ENCODE measurements at regions of chr11 and their contacts with region 1.

Region 1: DNA sequence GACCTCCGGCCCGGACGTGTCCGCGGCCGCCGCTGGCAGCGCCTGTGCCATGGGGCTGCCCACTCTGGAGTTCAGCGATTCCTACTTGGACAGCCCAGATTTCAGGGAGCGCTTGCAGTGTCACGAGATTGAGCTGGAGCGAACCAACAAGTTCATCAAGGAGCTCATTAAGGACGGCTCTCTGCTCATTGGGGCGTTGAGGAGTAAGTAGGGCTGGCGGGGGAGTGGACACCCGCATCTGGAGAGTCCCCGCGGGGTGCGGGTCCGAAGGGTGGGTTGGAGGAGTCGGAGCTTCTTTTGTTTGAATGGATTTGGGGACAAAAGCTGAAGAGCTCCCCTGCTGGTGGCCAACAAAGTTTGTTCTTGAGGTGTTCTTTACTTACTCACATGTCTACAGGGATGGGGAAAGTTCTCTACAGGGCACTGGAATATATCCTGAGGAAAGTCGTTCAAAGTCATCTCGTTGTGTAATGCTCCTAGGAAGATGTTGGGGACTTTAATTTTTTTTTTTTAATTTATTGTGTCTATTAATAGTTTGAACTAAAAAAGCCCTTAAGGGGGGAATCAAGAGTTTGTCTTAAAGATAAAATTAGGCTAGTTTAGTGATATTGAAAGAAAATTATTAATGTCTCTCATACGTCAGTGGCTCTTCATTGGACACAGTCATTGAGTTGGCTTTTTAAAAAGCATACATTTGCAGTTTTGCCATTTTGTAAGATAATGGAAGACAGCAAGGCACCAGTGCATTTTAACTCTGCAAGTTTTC is 725 bp downstream of the ARHGAP42 start:
- DNase-seq: peak in 2 of 3 donors; percentile 59 to 69
- ATAC-seq: peak; percentile 76 to 80
- H3K4me3 ChIP-seq: peak overlapping the region; percentile 78
- H3K27ac ChIP-seq: peak overlapping the region; percentile 70
- H3K4me1 ChIP-seq: peaks cover 2% of the 10 kb centered on the region
- H3K27me3 ChIP-seq: no peaks in the 10 kb centered on the region

Region 2: GRCh38 chr11:100581318-100581717 is 106.5 kb before region 1 on chr11:
- intact Hi-C with region 1: loop called in 1 of 4 experiments (anchors 10 kb)
- DNase-seq: no peak
- ATAC-seq: peak in 1 of 2 donors; percentile 25
- H3K4me3 ChIP-seq: no peak overlapping the region
- H3K27ac ChIP-seq: no peak overlapping the region
- H3K4me1 ChIP-seq: peaks cover 5% of the 10 kb centered on the region
- H3K27me3 ChIP-seq: no peaks in the 10 kb centered on the region

Region 3: DNA sequence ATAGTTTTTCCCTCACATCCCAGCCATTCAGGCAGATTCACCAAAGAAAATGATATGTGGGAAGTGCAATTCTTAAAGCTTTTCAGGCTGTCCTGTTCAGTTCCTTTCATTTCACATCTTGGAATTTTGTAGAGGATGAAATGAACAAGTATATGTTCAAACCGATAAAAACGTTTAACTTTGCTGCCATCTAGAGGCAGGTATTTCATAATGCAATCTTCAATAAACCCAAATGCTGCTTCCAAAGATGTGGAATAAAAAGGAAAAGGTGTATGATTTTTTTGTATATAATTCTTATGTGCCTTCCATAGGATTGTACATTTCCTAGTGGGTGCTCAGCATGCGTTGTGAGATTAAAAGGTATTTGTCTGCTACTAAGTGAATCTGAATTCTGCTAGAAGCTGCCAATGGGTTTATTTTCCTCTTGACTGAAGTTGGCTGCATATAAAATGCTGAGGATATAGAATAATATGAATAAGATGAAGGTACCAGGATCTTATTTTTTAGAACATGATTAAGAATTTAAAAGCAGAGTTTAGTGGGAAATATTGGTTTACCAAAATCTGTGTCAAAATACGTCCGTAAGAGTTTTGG is 242.5 kb after region 1 on chr11:
- intact Hi-C with region 1: loop called in 2 of 4 experiments (anchors 5 kb)
- DNase-seq: no peak
- ATAC-seq: peak in 1 of 2 donors; percentile 51
- H3K4me3 ChIP-seq: no peak overlapping the region
- H3K27ac ChIP-seq: no peak overlapping the region
- H3K4me1 ChIP-seq: no peaks in the 10 kb centered on the region
- H3K27me3 ChIP-seq: no peaks in the 10 kb centered on the region